Gastrocnemius medialis (tissue), 4 donors: ENCODE measurements at regions of chr9 and their contacts with region 1.

Region 1: GRCh38 chr9:36008774-36009300 is 27.9 kb upstream of the RECK start:
- DNase-seq: peak; percentile 11 to 41
- ATAC-seq: peak; percentile 78 to 87
- H3K4me3 ChIP-seq: no peak overlapping the region
- H3K27ac ChIP-seq: no peak overlapping the region
- H3K4me1 ChIP-seq: no peaks in the 10 kb centered on the region
- H3K27me3 ChIP-seq: peaks cover 0 to 3% (median 0%) of the 10 kb centered on the region in 3 donors
- CTCF ChIP-seq: peak; percentile 48 to 90 (median 81)
- POLR2A ChIP-seq: no peak

Region 2: GRCh38 chr9:36023260-36024048 is 14.6 kb after region 1 on chr9:
- in situ Hi-C with region 1: no loop called
- intact Hi-C with region 1: loop called (anchors 2 kb)
- DNase-seq: peak; percentile 13 to 36
- ATAC-seq: peak; percentile 74 to 76
- H3K4me3 ChIP-seq: no peak overlapping the region
- H3K27ac ChIP-seq: no peak overlapping the region
- H3K4me1 ChIP-seq: no peaks in the 10 kb centered on the region
- H3K27me3 ChIP-seq: no peaks in the 10 kb centered on the region
- CTCF ChIP-seq: peak; percentile 36 to 81 (median 72)
- POLR2A ChIP-seq: no peak

Region 3: GRCh38 chr9:36074870-36075532 is 66.2 kb after region 1 on chr9:
- in situ Hi-C with region 1: no loop called
- intact Hi-C with region 1: loop called (anchors 10 kb)
- DNase-seq: peak; percentile 50 to 67
- ATAC-seq: peak; percentile 60 to 85
- H3K4me3 ChIP-seq: no peak overlapping the region
- H3K27ac ChIP-seq: no peak overlapping the region
- H3K4me1 ChIP-seq: peaks cover 6 to 7% of the 10 kb centered on the region in 2 donors
- H3K27me3 ChIP-seq: no peaks in the 10 kb centered on the region
- CTCF ChIP-seq: no peak
- POLR2A ChIP-seq: no peak